ENCODE measurements at regions of chrX and their contacts with region 1.

Region 1: GRCh38 chrX:136694431-136695087 is 46.6 kb downstream of the CD40LG start:
- DNase-seq: peak; percentile 43
- H3K4me3 Mint-ChIP-seq: peak overlapping the region; percentile 58
- H3K27ac Mint-ChIP-seq: peak overlapping the region; percentile 98
- H3K4me1 Mint-ChIP-seq: peaks cover 79% of the 10 kb centered on the region
- H3K27me3 Mint-ChIP-seq: no peaks in the 10 kb centered on the region

Region 2: DNA sequence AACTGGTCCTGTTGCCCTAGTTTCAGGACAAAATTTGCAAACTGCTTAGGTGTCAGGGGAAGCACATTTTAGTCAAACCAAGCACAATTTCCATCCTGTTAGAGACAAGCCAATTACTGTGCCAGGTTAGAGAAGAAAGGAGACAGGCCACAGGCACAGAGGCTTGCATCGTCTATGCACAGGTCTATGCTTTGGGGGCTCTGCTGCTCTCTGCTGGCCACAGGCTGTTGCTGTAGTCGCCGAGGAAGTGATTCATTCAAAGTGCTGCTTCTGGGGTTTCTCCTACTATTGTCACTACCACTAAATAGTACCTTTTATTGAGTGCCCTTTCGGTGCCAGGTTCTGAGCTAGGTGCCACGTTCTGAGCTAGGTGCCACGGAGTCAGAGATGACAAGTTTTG is 117.0 kb before region 1 on chrX:
- CTCF ChIA-PET with region 1: interaction called, 33 read pairs
- DNase-seq: peak; percentile 83
- H3K4me3 Mint-ChIP-seq: no peak overlapping the region
- H3K27ac Mint-ChIP-seq: no peak overlapping the region
- H3K4me1 Mint-ChIP-seq: peaks cover 22% of the 10 kb centered on the region
- H3K27me3 Mint-ChIP-seq: peaks cover 3% of the 10 kb centered on the region

Region 3: GRCh38 chrX:136608295-136609171 is 86.0 kb before region 1 on chrX:
- CTCF ChIA-PET with region 1: interaction called, 43 read pairs
- DNase-seq: peak; percentile 76
- H3K4me3 Mint-ChIP-seq: peak overlapping the region; percentile 22
- H3K27ac Mint-ChIP-seq: peak overlapping the region; percentile 74
- H3K4me1 Mint-ChIP-seq: peaks cover 47% of the 10 kb centered on the region
- H3K27me3 Mint-ChIP-seq: no peaks in the 10 kb centered on the region

Region 4: GRCh38 chrX:136619899-136620505 is 74.6 kb before region 1 on chrX:
- CTCF ChIA-PET with region 1: no interaction called
- DNase-seq: peak; percentile 51
- H3K4me3 Mint-ChIP-seq: no peak overlapping the region
- H3K27ac Mint-ChIP-seq: peak overlapping the region; percentile 88
- H3K4me1 Mint-ChIP-seq: peaks cover 85% of the 10 kb centered on the region
- H3K27me3 Mint-ChIP-seq: no peaks in the 10 kb centered on the region

Region 5: GRCh38 chrX:136658151-136658550 is 36.4 kb before region 1 on chrX:
- CTCF ChIA-PET with region 1: interaction called, 14 read pairs
- DNase-seq: peak; percentile 49
- H3K4me3 Mint-ChIP-seq: peak overlapping the region; percentile 95
- H3K27ac Mint-ChIP-seq: peak overlapping the region; percentile 91
- H3K4me1 Mint-ChIP-seq: peaks cover 96% of the 10 kb centered on the region
- H3K27me3 Mint-ChIP-seq: no peaks in the 10 kb centered on the region

Region 6: GRCh38 chrX:136711147-136711546 is 16.6 kb after region 1 on chrX:
- CTCF ChIA-PET with region 1: interaction called, 12 read pairs
- DNase-seq: peak; percentile 31
- H3K4me3 Mint-ChIP-seq: no peak overlapping the region
- H3K27ac Mint-ChIP-seq: peak overlapping the region; percentile 88
- H3K4me1 Mint-ChIP-seq: peaks cover 52% of the 10 kb centered on the region
- H3K27me3 Mint-ChIP-seq: no peaks in the 10 kb centered on the region

Region 7: DNA sequence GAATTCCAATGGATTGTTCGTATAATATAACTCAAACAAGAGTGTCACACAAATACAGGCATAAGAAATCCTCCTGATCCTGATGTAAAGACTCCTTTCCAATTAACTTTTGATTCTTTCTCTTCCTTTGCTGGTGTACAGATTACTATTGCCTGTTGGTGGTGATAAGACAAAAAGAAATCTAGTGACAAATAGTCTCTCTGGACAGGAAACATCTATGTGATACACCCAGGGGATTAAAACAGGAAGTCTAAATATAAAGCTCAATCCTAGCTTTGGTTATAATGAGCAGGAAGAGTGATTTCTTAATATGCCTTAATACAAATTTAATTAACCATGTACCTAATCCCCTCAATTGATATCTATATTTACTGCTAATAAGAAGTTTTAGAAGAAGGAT is 41.0 kb after region 1 on chrX:
- CTCF ChIA-PET with region 1: no interaction called
- DNase-seq: no peak
- H3K4me3 Mint-ChIP-seq: no peak overlapping the region
- H3K27ac Mint-ChIP-seq: no peak overlapping the region
- H3K4me1 Mint-ChIP-seq: peaks cover 35% of the 10 kb centered on the region
- H3K27me3 Mint-ChIP-seq: no peaks in the 10 kb centered on the region

Region 8: DNA sequence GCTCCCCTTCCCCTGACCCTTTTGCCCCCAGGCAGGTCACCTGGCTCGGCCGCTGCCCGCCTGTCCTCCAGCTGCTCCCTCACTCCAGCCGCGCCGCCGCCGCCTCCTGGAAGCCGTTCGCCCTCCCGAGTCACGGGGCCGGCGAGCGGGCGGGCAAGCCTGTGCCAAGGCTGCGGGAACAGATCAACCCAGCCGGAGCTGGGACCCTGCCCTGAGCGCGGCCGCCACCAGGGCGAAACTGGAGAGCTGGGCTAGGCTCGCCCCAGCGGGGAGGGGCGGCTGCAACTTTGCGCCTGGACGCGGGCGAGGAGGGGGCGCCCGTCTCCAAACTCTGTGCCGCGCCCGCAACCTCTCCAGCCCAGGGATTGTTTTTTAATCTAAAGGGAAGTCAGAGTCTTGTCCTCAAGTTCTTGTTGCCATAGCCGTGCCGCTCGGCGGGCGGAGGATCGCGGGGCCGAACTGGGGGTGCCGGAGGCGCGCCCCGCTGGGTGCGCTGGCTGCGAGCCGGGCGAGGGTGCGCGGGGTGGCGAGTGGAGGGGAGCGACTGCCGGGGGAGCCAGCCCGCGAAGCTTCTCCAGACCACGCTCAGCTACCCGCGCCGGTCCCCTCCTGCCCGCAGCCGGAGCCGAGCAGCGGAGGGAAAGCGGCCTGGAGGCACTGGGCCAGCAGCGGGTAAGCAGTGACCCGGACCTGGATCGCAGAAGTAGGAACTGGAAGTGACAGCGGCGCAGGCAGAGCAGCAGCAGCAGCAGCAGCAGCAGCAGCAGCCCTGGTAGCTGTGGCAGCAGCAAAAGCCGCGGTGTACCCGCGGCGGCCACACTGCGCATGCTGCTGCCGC is 72.8 kb after region 1 on chrX:
- CTCF ChIA-PET with region 1: no interaction called
- DNase-seq: peak; percentile 67
- H3K4me3 Mint-ChIP-seq: peak overlapping the region; percentile 71
- H3K27ac Mint-ChIP-seq: peak overlapping the region; percentile 88
- H3K4me1 Mint-ChIP-seq: peaks cover 75% of the 10 kb centered on the region
- H3K27me3 Mint-ChIP-seq: no peaks in the 10 kb centered on the region

Region 9: GRCh38 chrX:137313627-137314026 is 619.1 kb after region 1 on chrX:
- CTCF ChIA-PET with region 1: no interaction called
- DNase-seq: peak; percentile 22
- H3K4me3 Mint-ChIP-seq: no peak overlapping the region
- H3K27ac Mint-ChIP-seq: no peak overlapping the region
- H3K4me1 Mint-ChIP-seq: no peaks in the 10 kb centered on the region
- H3K27me3 Mint-ChIP-seq: no peaks in the 10 kb centered on the region

Measured in activated naive CD4-positive, alpha-beta T cell treated with anti-CD3 and anti-CD28 coated beads, Interleukin-2, amount 10 ng/mL, durations not matched to agents 7 days and 5 days (primary cell).